ENCODE measurements at regions of chr17 and their contacts with region 1.

Region 1: GRCh38 chr17:4345581-4346252 is 20.8 kb downstream of the UBE2G1 start:
- DNase-seq: no peak
- H3K4me3 ChIP-seq: no peak overlapping the region
- H3K27ac ChIP-seq: peak overlapping the region; percentile 35
- H3K4me1 ChIP-seq: peaks cover 23% of the 10 kb centered on the region
- H3K27me3 ChIP-seq: no peaks in the 10 kb centered on the region
- CTCF ChIP-seq: no peak

Region 2: DNA sequence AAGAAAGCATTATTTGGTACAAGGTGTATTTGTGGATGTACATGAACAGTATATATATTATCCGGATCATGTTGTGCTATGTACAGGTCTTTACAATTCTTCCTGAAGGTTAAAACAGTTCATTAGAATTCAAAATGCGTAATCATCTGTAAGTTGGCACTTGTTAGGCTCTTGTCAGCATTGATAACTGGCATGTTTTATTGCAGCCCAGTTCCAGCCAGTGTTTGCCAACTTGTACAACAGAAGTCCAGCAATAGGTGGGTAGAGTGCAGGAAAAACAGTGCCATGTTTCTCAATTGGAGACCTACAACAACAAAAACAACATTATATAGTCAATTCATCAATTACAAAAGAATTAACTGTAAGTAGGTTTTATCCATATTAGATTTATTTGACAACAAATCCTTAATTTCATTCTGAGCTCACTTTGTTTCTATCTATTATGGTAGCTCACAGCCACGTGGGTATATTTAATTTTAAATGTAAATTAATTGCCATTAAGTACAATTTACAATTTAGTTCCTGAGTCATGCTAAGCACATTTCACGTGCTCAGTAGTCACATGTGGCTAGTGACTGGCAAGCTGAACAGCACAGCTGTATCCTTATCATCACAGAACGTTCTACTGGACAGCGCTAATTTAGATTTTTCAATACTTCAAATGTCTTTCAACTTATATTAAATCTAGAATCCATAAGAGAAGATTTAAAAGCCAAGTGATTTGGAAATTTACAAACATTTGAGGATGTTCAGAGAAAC is 73.3 kb before region 1 on chr17:
- CTCF ChIA-PET with region 1: no interaction called
- POLR2A ChIA-PET with region 1: interaction called, 18 read pairs
- intact Hi-C with region 1: no loop called
- DNase-seq: no peak
- H3K4me3 ChIP-seq: no peak overlapping the region
- H3K27ac ChIP-seq: no peak overlapping the region
- H3K4me1 ChIP-seq: no peaks in the 10 kb centered on the region
- H3K27me3 ChIP-seq: no peaks in the 10 kb centered on the region
- CTCF ChIP-seq: no peak

Region 3: DNA sequence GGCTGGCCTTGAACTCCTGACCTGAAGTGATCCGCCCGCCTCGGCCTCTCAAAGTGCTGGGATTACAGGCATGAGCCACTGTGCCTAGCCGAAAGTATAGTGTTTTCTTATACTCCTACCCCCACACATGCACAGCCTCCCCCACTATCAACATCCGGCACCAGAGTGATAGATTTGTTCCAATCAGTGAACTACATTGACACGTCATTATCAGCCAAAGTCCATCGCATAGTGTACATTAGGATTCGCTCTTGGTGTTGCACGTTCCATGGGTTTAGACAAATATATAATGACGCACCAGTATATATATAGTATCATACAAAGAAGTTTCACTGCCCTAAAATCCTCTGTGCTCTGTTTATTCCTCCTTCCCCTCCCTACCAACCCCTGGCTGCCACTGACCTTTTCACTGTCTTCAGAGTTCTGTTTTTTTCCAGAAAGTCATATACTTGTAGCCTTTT is 414.1 kb after region 1 on chr17:
- CTCF ChIA-PET with region 1: interaction called, 17 read pairs
- POLR2A ChIA-PET with region 1: no interaction called
- intact Hi-C with region 1: no loop called
- DNase-seq: no peak
- H3K4me3 ChIP-seq: no peak overlapping the region
- H3K27ac ChIP-seq: no peak overlapping the region
- H3K4me1 ChIP-seq: no peaks in the 10 kb centered on the region
- H3K27me3 ChIP-seq: peaks cover 26% of the 10 kb centered on the region
- CTCF ChIP-seq: no peak